Sigmoid colon (tissue), 7 donors: ENCODE measurements at regions of chr15 and their contacts with region 1.

Region 1: GRCh38 chr15:81400640-81401236 is 26.7 kb upstream of the TMC3 start:
- DNase-seq: no peak
- H3K4me3 ChIP-seq: no peak overlapping the region
- H3K27ac ChIP-seq: no peak overlapping the region
- H3K4me1 ChIP-seq: no peaks in the 10 kb centered on the region
- H3K27me3 ChIP-seq: no peaks in the 10 kb centered on the region
- CTCF ChIP-seq: peak; percentile 50 to 72 (median 68)
- EP300 ChIP-seq: no peak
- POLR2A ChIP-seq: no peak

Region 2: GRCh38 chr15:81111510-81112470 is 288.9 kb before region 1 on chr15:
- intact Hi-C with region 1: loop called (anchors 10 kb)
- DNase-seq: no peak
- H3K4me3 ChIP-seq: no peak overlapping the region
- H3K27ac ChIP-seq: no peak overlapping the region
- H3K4me1 ChIP-seq: peaks cover 0 to 1% (median 0%) of the 10 kb centered on the region in 4 donors
- H3K27me3 ChIP-seq: no peaks in the 10 kb centered on the region
- CTCF ChIP-seq: no peak
- EP300 ChIP-seq: no peak
- POLR2A ChIP-seq: no peak

Region 3: GRCh38 chr15:81274931-81275707 is 125.6 kb before region 1 on chr15:
- intact Hi-C with region 1: loop called (anchors 1 kb)
- DNase-seq: peak; percentile 85
- H3K4me3 ChIP-seq: no peak overlapping the region
- H3K27ac ChIP-seq: peak overlapping the region; percentile 17 to 49 (median 35)
- H3K4me1 ChIP-seq: peaks cover 0 to 17% (median 12%) of the 10 kb centered on the region in 4 donors
- H3K27me3 ChIP-seq: no peaks in the 10 kb centered on the region
- CTCF ChIP-seq: peak; percentile 74 to 85 (median 78)
- EP300 ChIP-seq: no peak
- POLR2A ChIP-seq: no peak

Region 4: DNA sequence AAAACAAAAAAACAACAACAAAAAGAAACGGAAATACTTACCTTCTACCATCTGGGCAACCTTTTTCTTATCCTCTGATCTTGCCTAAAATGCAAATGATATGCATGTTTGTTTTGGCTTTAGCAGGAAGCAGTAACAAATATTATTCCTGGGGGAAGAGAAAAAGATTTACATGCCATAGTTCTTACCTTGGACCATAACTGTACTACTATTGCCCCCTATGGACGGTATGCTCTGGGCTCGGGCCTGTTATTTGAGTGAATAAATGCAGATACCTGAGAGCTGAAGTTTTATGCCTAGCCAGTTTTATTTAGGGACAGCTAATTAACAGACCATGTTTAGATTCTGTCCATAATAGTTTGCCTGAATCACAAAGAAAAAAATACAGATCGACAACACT is 64.2 kb before region 1 on chr15:
- intact Hi-C with region 1: loop called (anchors 5 kb)
- DNase-seq: no peak
- H3K4me3 ChIP-seq: no peak overlapping the region
- H3K27ac ChIP-seq: no peak overlapping the region
- H3K4me1 ChIP-seq: peaks cover 0 to 29% (median 20%) of the 10 kb centered on the region in 4 donors
- H3K27me3 ChIP-seq: no peaks in the 10 kb centered on the region
- CTCF ChIP-seq: no peak
- EP300 ChIP-seq: no peak
- POLR2A ChIP-seq: no peak